CD4-positive, alpha-beta memory T cell (primary cell): ENCODE measurements at regions of chr14 and their contacts with region 1.

Region 1: DNA sequence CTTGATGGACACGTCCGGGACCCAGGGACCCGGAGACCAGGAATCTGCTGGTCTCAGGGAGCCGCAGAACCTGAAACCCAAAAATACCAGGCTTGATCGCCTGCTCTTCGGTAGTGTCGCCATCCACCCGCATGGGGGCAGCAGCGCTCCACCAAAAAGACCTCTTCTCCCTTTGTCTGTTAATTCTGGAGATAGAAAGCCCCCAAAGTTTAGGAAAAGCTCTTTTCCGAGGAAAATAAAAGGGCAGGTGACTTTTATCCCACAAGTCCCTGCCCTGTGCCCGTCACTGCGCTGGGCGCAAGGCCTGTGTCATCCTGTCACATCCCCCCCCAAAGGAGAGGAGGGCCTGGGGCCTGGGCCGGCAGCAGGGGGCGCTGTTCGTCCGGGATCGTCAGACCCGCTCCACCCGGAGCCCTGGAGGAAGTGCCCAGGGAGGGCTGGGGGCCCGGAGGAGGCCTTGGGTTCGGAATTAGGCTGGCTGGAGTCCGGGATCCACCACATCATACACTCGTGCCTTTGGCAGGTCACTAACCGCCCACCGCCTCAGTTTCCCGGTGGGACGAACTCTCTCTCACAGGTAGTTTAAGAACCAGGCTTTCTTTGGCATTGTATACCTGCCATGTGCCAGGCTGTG is 31.9 kb downstream of the DAD1 start:
- DNase-seq: peak; percentile 87 to 96 (median 91)
- H3K4me3 ChIP-seq: peak overlapping the region; percentile 80 to 85
- H3K4me3 Mint-ChIP-seq: peak overlapping the region; percentile 77 to 96 (median 88)
- H3K27ac ChIP-seq: peak overlapping the region; percentile 97
- H3K27ac Mint-ChIP-seq: peak overlapping the region; percentile 98 to 100 (median 100)
- H3K4me1 ChIP-seq: peaks cover 97% of the 10 kb centered on the region
- H3K4me1 Mint-ChIP-seq: peaks cover 75 to 97% (median 86%) of the 10 kb centered on the region in 4 donors
- H3K27me3 ChIP-seq: no peaks in the 10 kb centered on the region
- H3K27me3 Mint-ChIP-seq: peaks cover 2 to 4% of the 10 kb centered on the region in 2 donors

Region 2: DNA sequence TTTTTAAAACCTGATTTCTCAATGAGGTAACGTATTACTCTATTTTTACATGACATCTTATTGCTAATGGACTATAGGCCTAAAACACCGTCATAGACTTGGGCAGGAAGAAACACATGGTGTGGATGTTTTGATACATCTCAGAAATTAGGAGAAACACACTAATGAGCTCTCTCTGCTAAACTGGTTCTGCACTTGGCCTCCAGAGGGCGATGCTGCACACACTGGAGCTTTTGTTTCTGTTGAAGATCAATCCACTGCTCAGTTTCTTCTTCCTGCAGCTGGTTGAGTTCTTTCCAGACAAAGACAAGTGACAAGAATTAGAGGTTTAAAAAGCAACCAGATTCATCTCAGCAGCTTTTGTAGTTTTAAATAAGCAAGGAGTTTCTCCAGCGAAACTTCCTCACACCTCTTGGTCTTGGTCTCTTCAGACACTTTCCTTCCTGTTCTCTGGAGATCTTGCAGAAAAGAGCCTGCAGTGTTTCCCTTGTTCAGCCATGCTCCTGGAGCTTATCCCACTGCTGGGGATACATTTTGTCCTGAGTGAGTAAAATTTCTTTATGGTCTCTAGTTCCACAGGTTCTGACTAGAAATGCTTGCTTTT is 704.9 kb before region 1 on chr14:
- CTCF ChIA-PET with region 1: interaction called, 18 read pairs
- POLR2A ChIA-PET with region 1: interaction called, 49 read pairs
- intact Hi-C with region 1: no loop called
- DNase-seq: peak; percentile 62 to 69 (median 66)
- H3K4me3 ChIP-seq: peak overlapping the region in 1 of 2 donors; percentile 27
- H3K4me3 Mint-ChIP-seq: peak overlapping the region; percentile 77 to 87 (median 82)
- H3K27ac ChIP-seq: no peak overlapping the region
- H3K27ac Mint-ChIP-seq: peak overlapping the region; percentile 58 to 93 (median 81)
- H3K4me1 ChIP-seq: no peaks in the 10 kb centered on the region
- H3K4me1 Mint-ChIP-seq: peaks cover 5 to 14% (median 9%) of the 10 kb centered on the region in 4 donors
- H3K27me3 ChIP-seq: no peaks in the 10 kb centered on the region
- H3K27me3 Mint-ChIP-seq: peaks cover 5 to 12% of the 10 kb centered on the region in 2 donors

Region 3: GRCh38 chr14:21978184-21978998 is 578.7 kb before region 1 on chr14:
- CTCF ChIA-PET with region 1: interaction called, 14 read pairs
- POLR2A ChIA-PET with region 1: interaction called, 14 read pairs
- intact Hi-C with region 1: loop called (anchors 1 kb)
- DNase-seq: peak; percentile 60 to 63 (median 60)
- H3K4me3 ChIP-seq: no peak overlapping the region
- H3K4me3 Mint-ChIP-seq: peak overlapping the region; percentile 68 to 81 (median 74)
- H3K27ac ChIP-seq: no peak overlapping the region
- H3K27ac Mint-ChIP-seq: peak overlapping the region in 5 of 7 donors; percentile 14 to 83 (median 66)
- H3K4me1 ChIP-seq: peaks cover 7% of the 10 kb centered on the region
- H3K4me1 Mint-ChIP-seq: peaks cover 6 to 30% (median 19%) of the 10 kb centered on the region in 4 donors
- H3K27me3 ChIP-seq: no peaks in the 10 kb centered on the region
- H3K27me3 Mint-ChIP-seq: peaks cover 0 to 2% of the 10 kb centered on the region in 2 donors

Region 4: DNA sequence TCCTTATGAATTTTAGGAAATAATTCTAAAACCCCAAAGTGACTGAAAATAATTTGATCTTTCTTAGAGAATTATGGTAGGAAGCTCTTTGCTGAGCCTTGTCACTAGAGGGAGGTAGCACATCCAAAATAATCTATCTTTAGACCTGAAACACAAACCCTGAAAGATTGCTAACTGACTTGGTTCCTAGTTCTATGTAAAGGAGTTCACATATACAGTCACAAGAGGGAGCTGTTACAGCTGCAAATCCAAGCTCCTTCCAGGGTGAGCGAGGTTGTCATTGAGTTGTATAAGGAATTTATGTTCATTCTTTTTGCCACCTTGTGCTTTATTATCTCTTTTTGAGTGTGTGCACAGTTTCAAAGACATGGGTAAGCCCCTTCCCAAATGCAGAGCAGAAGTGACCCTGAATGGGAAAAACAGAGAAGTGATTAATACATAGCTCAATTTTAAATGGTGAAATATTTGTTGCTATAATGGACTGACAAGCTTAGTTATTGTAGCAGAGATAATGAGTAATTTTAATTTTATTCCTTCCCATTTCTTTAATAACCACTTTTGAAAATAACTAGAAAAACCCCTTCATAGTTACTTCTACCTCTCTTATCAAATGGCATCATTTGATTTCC is 356.0 kb before region 1 on chr14:
- CTCF ChIA-PET with region 1: interaction called, 4 read pairs
- POLR2A ChIA-PET with region 1: interaction called, 7 read pairs
- intact Hi-C with region 1: loop called (anchors 2 kb)
- DNase-seq: peak in 4 of 5 donors; percentile 28 to 43 (median 34)
- H3K4me3 ChIP-seq: no peak overlapping the region
- H3K4me3 Mint-ChIP-seq: peak overlapping the region in 2 of 8 donors; percentile 39 to 58
- H3K27ac ChIP-seq: no peak overlapping the region
- H3K27ac Mint-ChIP-seq: peak overlapping the region in 1 of 7 donors; percentile 52
- H3K4me1 ChIP-seq: no peaks in the 10 kb centered on the region
- H3K4me1 Mint-ChIP-seq: peaks cover 0 to 4% (median 1%) of the 10 kb centered on the region in 4 donors
- H3K27me3 ChIP-seq: no peaks in the 10 kb centered on the region
- H3K27me3 Mint-ChIP-seq: no peaks in the 10 kb centered on the region

Region 5: DNA sequence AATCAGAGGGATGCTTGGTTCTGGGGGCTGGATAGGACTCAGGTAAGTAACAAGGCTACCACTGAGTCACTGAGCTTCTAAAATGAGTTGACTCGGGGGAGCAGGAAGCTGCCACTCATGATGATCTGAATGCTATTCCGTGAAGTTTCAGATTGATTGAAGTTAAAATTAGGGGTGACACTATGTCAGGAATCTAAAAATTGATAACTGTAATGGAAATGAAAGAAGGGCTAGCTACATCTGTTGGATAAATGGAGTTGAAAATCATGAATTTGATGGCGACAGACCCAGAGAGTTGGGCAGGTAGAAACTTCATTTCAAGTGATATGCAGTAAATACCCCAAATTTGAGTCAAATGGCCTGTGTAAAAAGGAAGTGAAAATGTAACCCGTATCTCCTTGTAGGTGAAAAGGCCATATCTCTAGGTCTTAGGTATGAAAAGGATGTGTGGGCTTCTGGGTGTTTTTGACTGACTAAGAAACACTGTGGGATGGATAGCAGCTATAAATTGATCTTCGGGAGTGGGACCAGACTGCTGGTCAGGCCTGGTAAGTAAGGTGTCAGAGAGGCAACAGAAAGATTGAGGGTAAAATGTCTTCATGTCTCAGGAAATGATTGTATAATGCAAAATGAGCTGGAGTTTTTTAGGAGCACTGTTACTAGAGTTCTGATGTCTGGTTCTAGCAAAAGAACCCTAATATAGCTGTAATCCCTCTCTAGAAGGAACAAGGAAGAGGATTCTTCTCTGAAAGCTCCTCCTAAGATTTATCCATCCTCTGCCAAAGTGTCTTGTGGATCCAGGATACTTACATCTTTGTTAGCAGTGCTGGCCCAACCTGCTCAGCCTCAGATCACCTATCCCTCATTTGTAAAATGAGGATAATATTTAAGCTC is 25.4 kb before region 1 on chr14:
- CTCF ChIA-PET with region 1: interaction called, 81 read pairs
- POLR2A ChIA-PET with region 1: interaction called, 1,762 read pairs
- intact Hi-C with region 1: no loop called
- DNase-seq: peak in 2 of 5 donors; percentile 51 to 65
- H3K4me3 ChIP-seq: peak overlapping the region; percentile 44 to 49
- H3K4me3 Mint-ChIP-seq: peak overlapping the region; percentile 84 to 91 (median 90)
- H3K27ac ChIP-seq: peak overlapping the region; percentile 58
- H3K27ac Mint-ChIP-seq: peak overlapping the region; percentile 92 to 100 (median 97)
- H3K4me1 ChIP-seq: peaks cover 96% of the 10 kb centered on the region
- H3K4me1 Mint-ChIP-seq: peaks cover 78 to 99% (median 86%) of the 10 kb centered on the region in 4 donors
- H3K27me3 ChIP-seq: no peaks in the 10 kb centered on the region
- H3K27me3 Mint-ChIP-seq: no peaks in the 10 kb centered on the region

Region 6: GRCh38 chr14:22872033-22872832 is 315.1 kb after region 1 on chr14:
- CTCF ChIA-PET with region 1: interaction called, 3 read pairs
- POLR2A ChIA-PET with region 1: interaction called, 28 read pairs
- intact Hi-C with region 1: no loop called
- DNase-seq: peak; percentile 66 to 78 (median 73)
- H3K4me3 ChIP-seq: peak overlapping the region; percentile 24 to 55
- H3K4me3 Mint-ChIP-seq: peak overlapping the region; percentile 88 to 98 (median 97)
- H3K27ac ChIP-seq: peak overlapping the region; percentile 79
- H3K27ac Mint-ChIP-seq: peak overlapping the region; percentile 72 to 100 (median 89)
- H3K4me1 ChIP-seq: peaks cover 48% of the 10 kb centered on the region
- H3K4me1 Mint-ChIP-seq: peaks cover 17 to 46% (median 33%) of the 10 kb centered on the region in 4 donors
- H3K27me3 ChIP-seq: no peaks in the 10 kb centered on the region
- H3K27me3 Mint-ChIP-seq: no peaks in the 10 kb centered on the region